ENCODE measurements at regions of chr14 and their contacts with region 1.

Region 1: GRCh38 chr14:74762917-74763802 is at the start of gene YLPM1:
- DNase-seq: peak; percentile 82 to 94 (median 89)
- H3K4me3 ChIP-seq: peak within 1 kb of the TSS; percentile 61 to 100 (median 98)
- H3K27ac ChIP-seq: peak within 1 kb of the TSS in 58 of 59 donors; percentile 66 to 97 (median 88)
- H3K27me3 ChIP-seq: no peaks in the 10 kb centered on the region
- CTCF ChIP-seq: peak; percentile 69 to 96 (median 84)
- total RNA-seq, gene YLPM1: 104 to 164 (median 132) TPM

Region 2: DNA sequence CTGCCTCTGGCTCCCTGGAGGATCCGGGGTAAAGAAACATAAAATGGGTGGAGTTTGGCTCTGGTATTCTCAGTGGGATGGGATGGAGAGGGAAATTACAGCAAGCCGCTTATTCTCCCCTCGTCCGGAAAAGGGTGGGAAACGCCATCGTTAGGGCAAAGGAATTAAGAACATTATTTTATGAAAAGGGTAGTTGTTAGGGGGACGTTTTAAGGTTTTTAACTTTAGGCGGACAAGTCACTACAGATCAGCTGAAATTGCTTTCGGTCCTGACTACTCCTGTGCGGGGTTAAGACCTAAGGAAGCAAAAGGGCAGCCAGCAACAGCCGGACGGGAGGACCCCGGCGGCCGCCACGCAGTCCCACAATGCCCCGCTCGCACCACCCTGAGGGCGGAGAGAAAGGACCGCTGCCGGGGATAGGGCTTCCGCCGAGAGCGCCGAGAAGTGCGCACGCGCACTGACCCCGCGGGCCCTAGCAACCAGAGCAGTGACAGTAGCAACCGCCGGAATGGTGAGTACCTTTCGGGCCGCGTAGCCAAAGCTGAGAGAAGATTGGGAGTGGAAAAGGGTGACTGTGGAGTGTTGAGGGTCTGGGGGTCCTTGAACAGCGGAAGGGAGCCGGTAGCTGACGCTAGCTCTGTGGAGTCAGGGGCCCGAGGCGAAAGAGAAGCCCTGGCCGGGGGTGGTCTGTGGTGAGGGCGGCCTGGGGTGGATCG is 1118.5 kb before region 1 on chr14 and contains the start of gene DNAL1:
- intact Hi-C with region 1: loop called in 1 of 2 experiments (anchors 10 kb)
- DNase-seq: peak; percentile 89 to 96 (median 92)
- H3K4me3 ChIP-seq: peak within 1 kb of the TSS; percentile 65 to 100 (median 87)
- H3K27ac ChIP-seq: peak within 1 kb of the TSS; percentile 44 to 95 (median 88)
- H3K27me3 ChIP-seq: no peaks in the 10 kb centered on the region
- CTCF ChIP-seq: peak in 40 of 56 donors; percentile 11 to 65 (median 38)
- total RNA-seq, gene DNAL1: 17.3 to 60.9 (median 39.3) TPM

Region 3: GRCh38 chr14:74302634-74303577 is 460.3 kb before region 1 on chr14 and contains the start of gene ABCD4:
- intact Hi-C with region 1: loop called in 1 of 2 experiments (anchors 5 kb)
- DNase-seq: peak; percentile 95 to 98 (median 96)
- H3K4me3 ChIP-seq: peak within 1 kb of the TSS; percentile 63 to 100 (median 92)
- H3K27ac ChIP-seq: peak within 1 kb of the TSS; percentile 21 to 95 (median 86)
- H3K27me3 ChIP-seq: no peaks in the 10 kb centered on the region
- CTCF ChIP-seq: peak; percentile 72 to 98 (median 85)
- total RNA-seq, gene ABCD4: 45.9 to 169 (median 85.2) TPM

Region 4: GRCh38 chr14:74493343-74494261 is 269.6 kb before region 1 on chr14 and contains the start of gene ISCA2:
- intact Hi-C with region 1: loop called (anchors 2 to 5 kb)
- DNase-seq: peak; percentile 96 to 100 (median 98)
- H3K4me3 ChIP-seq: peak within 1 kb of the TSS; percentile 74 to 100 (median 94)
- H3K27ac ChIP-seq: peak within 1 kb of the TSS; percentile 61 to 96 (median 87)
- H3K27me3 ChIP-seq: no peaks in the 10 kb centered on the region
- CTCF ChIP-seq: peak in 25 of 56 donors; percentile 4 to 47 (median 18)
- total RNA-seq, gene ISCA2: 16.2 to 34.8 (median 23.3) TPM

Region 5: GRCh38 chr14:74612350-74613021 is 150.7 kb before region 1 on chr14:
- intact Hi-C with region 1: loop called in 1 of 2 experiments (anchors 2 kb)
- DNase-seq: peak in 9 of 10 donors; percentile 32 to 76 (median 45)
- H3K4me3 ChIP-seq: peak overlapping the region; percentile 34 to 75 (median 58)
- H3K27ac ChIP-seq: peak overlapping the region in 2 of 59 donors; percentile 10 to 37
- H3K27me3 ChIP-seq: peaks cover 0 to 64% (median 31%) of the 10 kb centered on the region in 45 donors
- CTCF ChIP-seq: peak in 55 of 56 donors; percentile 10 to 76 (median 56)

Region 6: DNA sequence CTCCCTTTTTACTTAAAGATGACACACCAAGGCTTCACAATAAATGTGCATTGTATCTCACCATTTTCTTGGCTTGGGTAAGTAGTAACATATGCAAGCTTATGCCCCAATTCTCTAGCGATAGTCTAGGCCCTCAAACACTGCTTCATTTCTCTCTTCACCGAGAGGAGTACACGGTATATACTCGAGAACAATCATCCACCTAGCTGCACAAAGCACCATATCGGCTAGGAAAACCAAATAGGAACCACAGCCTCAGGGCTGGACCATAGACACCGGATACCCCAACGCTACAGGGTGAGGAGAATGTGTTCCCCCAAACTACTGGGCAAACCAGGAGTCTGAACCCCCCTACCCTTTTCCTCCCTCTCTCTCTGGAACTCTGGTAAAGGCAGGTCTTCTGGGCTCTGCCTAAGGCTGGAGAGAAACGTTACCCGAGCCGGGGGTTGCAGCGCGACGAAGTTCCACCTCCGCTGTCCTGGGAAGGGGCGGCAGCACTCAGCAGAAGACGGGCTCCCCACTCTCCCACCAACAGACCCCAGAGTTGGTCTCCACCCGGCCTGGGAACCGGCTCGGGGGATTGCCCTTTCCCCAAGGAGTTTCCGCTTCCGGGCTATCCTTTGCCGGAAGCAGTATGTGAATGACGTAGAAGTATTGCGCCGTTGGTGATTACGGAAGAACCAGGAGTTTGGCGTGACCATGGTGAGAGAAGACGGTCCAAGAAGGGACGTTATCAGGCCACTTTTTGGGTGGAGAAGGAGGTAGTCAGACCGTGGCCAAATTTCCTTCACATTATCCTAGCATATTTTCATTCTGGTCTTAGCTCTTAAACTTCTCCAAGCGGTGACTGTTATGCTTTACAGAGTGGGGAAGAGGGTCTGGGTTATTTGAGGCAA is 50.4 kb before region 1 on chr14 and contains the starts of genes AREL1 and FCF1:
- intact Hi-C with region 1: loop called (anchors 1 to 2 kb)
- DNase-seq: peak; percentile 70 to 93 (median 88)
- H3K4me3 ChIP-seq: peak within 1 kb of the TSS; percentile 65 to 99 (median 86)
- H3K27ac ChIP-seq: peak within 1 kb of the TSS in 52 of 59 donors; percentile 18 to 90 (median 68)
- H3K27me3 ChIP-seq: no peaks in the 10 kb centered on the region
- CTCF ChIP-seq: peak in 37 of 56 donors; percentile 3 to 56 (median 29)
- total RNA-seq, gene AREL1: 29.3 to 61.7 (median 41.7) TPM
- total RNA-seq, gene FCF1: 18.0 to 37.6 (median 25.6) TPM

Region 7: DNA sequence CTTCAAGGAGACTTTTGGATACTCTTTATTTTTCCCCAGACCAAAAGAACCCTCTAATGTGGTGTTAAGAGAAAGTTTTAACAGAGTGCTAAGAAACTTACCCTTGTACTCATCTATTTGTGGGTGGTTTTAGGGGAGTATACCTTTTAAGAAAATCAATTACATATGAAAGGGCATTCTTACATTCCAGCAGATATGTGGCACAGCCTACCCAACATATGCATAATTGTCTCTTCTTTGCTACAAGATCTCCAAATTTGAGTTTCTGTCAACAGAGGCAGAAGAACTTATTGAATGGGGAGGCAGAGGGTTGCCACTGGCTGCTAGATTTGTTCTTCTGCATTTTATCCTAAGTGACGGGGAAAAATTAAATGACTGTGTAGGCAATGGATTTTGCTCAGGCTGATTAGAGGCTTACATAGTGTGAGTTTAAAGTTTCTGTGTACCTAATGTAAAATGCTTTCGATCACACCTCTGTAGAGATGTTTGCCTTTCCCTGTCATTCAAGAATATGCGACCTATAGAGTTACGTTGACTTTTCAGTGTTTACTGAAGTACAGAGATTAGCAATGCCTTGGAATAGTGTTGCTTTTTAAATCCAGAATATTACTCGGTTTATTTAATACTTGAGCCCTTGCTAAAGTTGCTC is 58.2 kb after region 1 on chr14:
- intact Hi-C with region 1: no loop called
- DNase-seq: no peak
- H3K4me3 ChIP-seq: no peak overlapping the region
- H3K27ac ChIP-seq: no peak overlapping the region
- H3K27me3 ChIP-seq: no peaks in the 10 kb centered on the region
- CTCF ChIP-seq: no peak

Region 8: GRCh38 chr14:74881431-74882361 is 118.5 kb after region 1 on chr14 and contains the start of gene DLST:
- intact Hi-C with region 1: loop called in 1 of 2 experiments (anchors 5 kb)
- DNase-seq: peak; percentile 71 to 92 (median 78)
- H3K4me3 ChIP-seq: peak within 1 kb of the TSS; percentile 61 to 100 (median 95)
- H3K27ac ChIP-seq: peak within 1 kb of the TSS; percentile 68 to 98 (median 93)
- H3K27me3 ChIP-seq: no peaks in the 10 kb centered on the region
- CTCF ChIP-seq: peak in 26 of 56 donors; percentile 5 to 51 (median 27)
- total RNA-seq, gene DLST: 54.1 to 89.6 (median 72.8) TPM